Activated naive CD4-positive, alpha-beta T cell treated with anti-CD3 and anti-CD28 coated beads, Interleukin-2, amount 10 ng/mL, durations not matched to agents 7 days and 5 days (primary cell): ENCODE measurements at regions of chr4 and their contacts with region 1.

Region 1: GRCh38 chr4:7067452-7068278 is at the start of gene GRPEL1:
- DNase-seq: peak; percentile 100
- H3K4me3 Mint-ChIP-seq: peak within 1 kb of the TSS; percentile 90
- H3K27ac Mint-ChIP-seq: peak within 1 kb of the TSS; percentile 94
- H3K4me1 Mint-ChIP-seq: peaks cover 59% of the 10 kb centered on the region
- H3K27me3 Mint-ChIP-seq: peaks cover 24% of the 10 kb centered on the region

Region 2: DNA sequence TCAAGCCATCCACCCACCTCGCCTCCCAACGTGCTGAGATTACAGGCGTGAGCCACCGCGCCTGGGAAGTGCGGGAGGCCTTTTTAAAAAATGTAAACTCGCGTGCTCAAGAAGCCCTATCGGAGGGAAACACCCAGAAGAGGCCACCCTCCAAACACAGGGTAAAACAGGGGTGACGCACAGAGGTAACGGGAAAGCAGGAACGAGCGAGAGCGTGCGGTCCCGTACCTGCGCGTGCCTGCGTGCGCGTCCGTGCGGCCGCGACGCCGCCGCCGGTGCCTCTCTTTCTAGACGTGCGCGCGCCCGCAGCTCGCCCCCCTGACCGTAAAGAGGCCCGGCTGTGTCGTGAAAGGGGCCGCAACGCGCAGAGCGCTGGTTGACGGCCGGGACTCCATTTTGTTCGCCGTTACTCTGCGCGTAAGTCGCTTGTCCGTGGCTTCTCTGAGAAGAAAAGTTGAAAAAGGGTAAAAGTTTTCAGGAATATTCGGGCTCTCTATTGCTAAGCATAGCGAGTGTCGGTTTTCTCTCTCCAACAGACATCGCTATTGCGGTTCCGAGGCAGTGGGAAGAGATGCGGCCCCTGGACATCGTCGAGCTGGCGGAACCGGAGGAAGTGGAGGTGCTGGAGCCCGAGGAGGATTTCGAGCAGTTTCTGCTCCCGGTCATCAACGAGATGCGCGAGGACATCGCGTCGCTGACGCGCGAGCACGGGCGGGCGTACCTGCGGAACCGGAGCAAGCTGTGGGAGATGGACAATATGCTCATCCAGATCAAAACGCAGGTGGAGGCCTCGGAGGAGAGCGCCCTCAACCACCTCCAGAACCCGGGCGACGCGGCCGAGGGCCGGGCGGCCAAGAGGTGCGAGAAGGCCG is 427.1 kb before region 1 on chr4 and contains the start of gene MRFAP1:
- CTCF ChIA-PET with region 1: no interaction called
- DNase-seq: peak; percentile 95
- H3K4me3 Mint-ChIP-seq: peak within 1 kb of the TSS; percentile 99
- H3K27ac Mint-ChIP-seq: peak within 1 kb of the TSS; percentile 99
- H3K4me1 Mint-ChIP-seq: peaks cover 32% of the 10 kb centered on the region
- H3K27me3 Mint-ChIP-seq: no peaks in the 10 kb centered on the region

Region 3: DNA sequence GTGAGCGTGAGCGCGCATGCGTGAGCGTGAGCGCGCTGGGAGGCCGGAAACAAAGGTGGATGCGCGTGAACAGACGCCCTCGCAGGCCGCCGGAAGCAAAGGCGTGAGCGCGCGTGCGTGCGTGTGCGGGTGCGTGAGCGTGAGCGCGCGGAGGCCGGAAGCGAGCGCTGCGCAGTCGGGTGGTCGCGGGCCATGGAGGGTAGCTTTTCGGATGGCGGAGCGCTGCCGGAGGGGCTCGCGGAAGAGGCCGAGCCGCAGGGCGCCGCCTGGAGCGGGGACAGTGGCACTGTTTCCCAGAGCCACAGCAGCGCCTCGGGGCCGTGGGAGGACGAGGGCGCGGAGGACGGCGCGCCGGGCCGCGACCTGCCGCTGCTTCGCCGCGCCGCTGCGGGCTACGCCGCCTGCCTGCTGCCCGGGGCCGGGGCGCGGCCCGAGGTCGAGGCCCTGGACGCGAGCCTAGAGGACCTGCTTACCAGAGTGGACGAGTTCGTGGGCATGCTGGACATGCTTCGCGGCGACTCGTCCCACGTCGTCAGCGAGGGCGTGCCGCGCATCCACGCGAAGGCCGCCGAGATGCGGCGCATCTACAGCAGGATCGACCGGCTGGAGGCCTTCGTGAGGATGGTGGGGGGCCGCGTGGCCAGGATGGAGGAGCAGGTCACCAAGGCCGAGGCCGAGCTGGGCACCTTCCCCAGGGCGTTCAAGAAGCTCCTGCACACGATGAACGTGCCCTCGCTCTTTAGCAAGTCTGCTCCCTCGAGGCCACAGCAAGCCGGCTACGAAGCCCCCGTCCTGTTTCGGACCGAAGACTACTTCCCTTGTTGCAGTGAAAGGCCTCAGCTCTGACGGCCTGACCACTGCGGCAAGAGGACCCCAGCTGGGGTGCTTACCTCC is 351.4 kb before region 1 on chr4 and contains the start of gene BLOC1S4:
- CTCF ChIA-PET with region 1: interaction called, 39 read pairs
- DNase-seq: peak; percentile 89
- H3K4me3 Mint-ChIP-seq: peak within 1 kb of the TSS; percentile 89
- H3K27ac Mint-ChIP-seq: peak within 1 kb of the TSS; percentile 96
- H3K4me1 Mint-ChIP-seq: peaks cover 34% of the 10 kb centered on the region
- H3K27me3 Mint-ChIP-seq: peaks cover 15% of the 10 kb centered on the region

Region 4: GRCh38 chr4:6892190-6892908 is 175.3 kb before region 1 on chr4:
- CTCF ChIA-PET with region 1: interaction called, 13 read pairs
- DNase-seq: peak; percentile 70
- H3K4me3 Mint-ChIP-seq: peak overlapping the region; percentile 17
- H3K27ac Mint-ChIP-seq: peak overlapping the region; percentile 86
- H3K4me1 Mint-ChIP-seq: peaks cover 39% of the 10 kb centered on the region
- H3K27me3 Mint-ChIP-seq: no peaks in the 10 kb centered on the region

Region 5: GRCh38 chr4:6909073-6909965 is 158.3 kb before region 1 on chr4 and contains the start of gene TBC1D14:
- CTCF ChIA-PET with region 1: interaction called, 21 read pairs
- DNase-seq: peak; percentile 91
- H3K4me3 Mint-ChIP-seq: peak within 1 kb of the TSS; percentile 90
- H3K27ac Mint-ChIP-seq: peak within 1 kb of the TSS; percentile 89
- H3K4me1 Mint-ChIP-seq: peaks cover 63% of the 10 kb centered on the region
- H3K27me3 Mint-ChIP-seq: peaks cover 31% of the 10 kb centered on the region

Region 6: GRCh38 chr4:6974138-6974848 is 93.4 kb before region 1 on chr4:
- CTCF ChIA-PET with region 1: interaction called, 25 read pairs
- DNase-seq: peak; percentile 90
- H3K4me3 Mint-ChIP-seq: no peak overlapping the region
- H3K27ac Mint-ChIP-seq: peak overlapping the region; percentile 49
- H3K4me1 Mint-ChIP-seq: peaks cover 13% of the 10 kb centered on the region
- H3K27me3 Mint-ChIP-seq: no peaks in the 10 kb centered on the region

Region 7: DNA sequence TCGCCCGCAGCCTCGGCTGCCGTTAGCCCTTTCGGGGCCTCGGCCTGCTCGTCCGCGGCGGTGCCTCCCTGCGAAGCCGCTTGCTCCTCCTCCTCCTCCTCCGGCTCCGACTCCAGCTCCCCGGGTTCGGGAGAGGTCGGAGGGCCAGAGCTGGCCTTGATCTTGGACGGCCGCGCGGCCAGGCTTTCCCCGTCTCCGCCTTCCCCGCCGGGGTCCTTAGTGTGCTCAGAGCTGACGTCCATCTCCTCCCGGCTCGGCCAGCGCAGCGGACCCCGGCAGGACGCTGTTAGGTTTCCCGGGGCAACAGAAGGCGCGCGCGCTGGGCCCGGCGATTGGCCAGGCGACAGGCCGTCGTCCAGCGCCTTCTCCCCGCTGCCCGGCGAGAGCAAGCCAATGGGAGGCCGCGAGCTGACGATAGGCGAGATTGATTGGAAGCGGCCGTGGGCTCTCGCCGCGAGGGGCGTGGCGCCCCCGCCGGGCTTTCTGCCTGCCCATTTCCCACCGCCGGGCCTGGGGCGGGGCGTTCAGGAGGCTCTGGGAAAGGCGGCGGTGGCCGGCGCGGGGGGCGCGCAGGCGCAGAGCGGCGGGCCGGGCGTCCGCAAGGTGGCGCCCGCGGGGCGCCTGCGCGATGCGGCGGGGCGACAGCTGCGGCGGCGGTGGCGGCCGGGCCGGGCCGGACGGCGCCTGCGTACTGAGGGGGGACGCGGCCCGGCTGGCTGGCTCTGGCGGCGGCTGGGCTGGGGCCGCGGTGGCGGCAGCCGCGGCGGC is 24.8 kb before region 1 on chr4 and contains the start of gene TADA2B:
- CTCF ChIA-PET with region 1: interaction called, 122 read pairs
- DNase-seq: peak; percentile 93
- H3K4me3 Mint-ChIP-seq: peak within 1 kb of the TSS; percentile 94
- H3K27ac Mint-ChIP-seq: peak within 1 kb of the TSS; percentile 89
- H3K4me1 Mint-ChIP-seq: peaks cover 46% of the 10 kb centered on the region
- H3K27me3 Mint-ChIP-seq: peaks cover 20% of the 10 kb centered on the region

Region 8: GRCh38 chr4:7192252-7193029 is 124.8 kb after region 1 on chr4 and contains the start of gene SORCS2:
- CTCF ChIA-PET with region 1: no interaction called
- DNase-seq: peak; percentile 66
- H3K4me3 Mint-ChIP-seq: peak within 1 kb of the TSS; percentile 54
- H3K27ac Mint-ChIP-seq: no peak within 1 kb of the TSS
- H3K4me1 Mint-ChIP-seq: no peaks in the 10 kb centered on the region
- H3K27me3 Mint-ChIP-seq: peaks cover 95% of the 10 kb centered on the region